ENCODE measurements at regions of chr20 and their contacts with region 1.

Region 1: GRCh38 chr20:48904365-48905296 is 16.9 kb upstream of the ARFGEF2 start:
- DNase-seq: peak; percentile 79
- H3K4me3 Mint-ChIP-seq: no peak overlapping the region
- H3K27ac Mint-ChIP-seq: peak overlapping the region; percentile 28
- H3K4me1 Mint-ChIP-seq: peaks cover 9% of the 10 kb centered on the region
- H3K27me3 Mint-ChIP-seq: peaks cover 2% of the 10 kb centered on the region

Region 2: GRCh38 chr20:48635433-48636310 is 269.0 kb before region 1 on chr20:
- CTCF ChIA-PET with region 1: interaction called, 21 read pairs
- POLR2A ChIA-PET with region 1: no interaction called
- DNase-seq: peak; percentile 73
- H3K4me3 Mint-ChIP-seq: no peak overlapping the region
- H3K27ac Mint-ChIP-seq: no peak overlapping the region
- H3K4me1 Mint-ChIP-seq: peaks cover 15% of the 10 kb centered on the region
- H3K27me3 Mint-ChIP-seq: no peaks in the 10 kb centered on the region

Region 3: DNA sequence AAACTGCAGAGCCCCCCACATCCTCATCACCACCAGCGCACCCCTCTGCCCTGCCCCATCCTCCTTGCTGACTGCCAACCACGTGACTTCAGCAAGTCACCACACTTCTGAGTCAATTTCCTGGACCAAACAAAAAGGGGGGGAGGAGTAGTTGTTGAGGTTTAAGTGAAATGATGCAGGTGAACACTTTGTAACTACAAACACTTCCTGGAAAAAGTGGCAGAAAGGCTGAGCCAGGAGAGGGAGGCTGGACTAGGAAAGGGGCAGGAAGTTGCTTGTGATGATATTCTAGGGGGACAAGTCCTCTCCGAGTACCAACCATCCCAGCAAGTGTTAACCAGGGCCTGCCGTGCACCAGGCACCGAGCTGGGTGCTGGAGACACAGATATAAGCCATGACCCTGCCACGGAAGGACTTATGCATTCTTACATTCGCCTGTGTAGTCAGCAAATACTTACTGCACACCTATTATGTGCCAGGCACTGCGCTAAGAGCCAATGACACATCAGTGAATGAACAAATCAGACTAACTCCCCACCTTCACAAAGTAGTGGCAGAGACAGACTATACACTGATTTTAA is 144.1 kb before region 1 on chr20:
- CTCF ChIA-PET with region 1: no interaction called
- POLR2A ChIA-PET with region 1: no interaction called
- DNase-seq: peak; percentile 86
- H3K4me3 Mint-ChIP-seq: peak overlapping the region; percentile 55
- H3K27ac Mint-ChIP-seq: peak overlapping the region; percentile 94
- H3K4me1 Mint-ChIP-seq: peaks cover 87% of the 10 kb centered on the region
- H3K27me3 Mint-ChIP-seq: no peaks in the 10 kb centered on the region

Region 4: DNA sequence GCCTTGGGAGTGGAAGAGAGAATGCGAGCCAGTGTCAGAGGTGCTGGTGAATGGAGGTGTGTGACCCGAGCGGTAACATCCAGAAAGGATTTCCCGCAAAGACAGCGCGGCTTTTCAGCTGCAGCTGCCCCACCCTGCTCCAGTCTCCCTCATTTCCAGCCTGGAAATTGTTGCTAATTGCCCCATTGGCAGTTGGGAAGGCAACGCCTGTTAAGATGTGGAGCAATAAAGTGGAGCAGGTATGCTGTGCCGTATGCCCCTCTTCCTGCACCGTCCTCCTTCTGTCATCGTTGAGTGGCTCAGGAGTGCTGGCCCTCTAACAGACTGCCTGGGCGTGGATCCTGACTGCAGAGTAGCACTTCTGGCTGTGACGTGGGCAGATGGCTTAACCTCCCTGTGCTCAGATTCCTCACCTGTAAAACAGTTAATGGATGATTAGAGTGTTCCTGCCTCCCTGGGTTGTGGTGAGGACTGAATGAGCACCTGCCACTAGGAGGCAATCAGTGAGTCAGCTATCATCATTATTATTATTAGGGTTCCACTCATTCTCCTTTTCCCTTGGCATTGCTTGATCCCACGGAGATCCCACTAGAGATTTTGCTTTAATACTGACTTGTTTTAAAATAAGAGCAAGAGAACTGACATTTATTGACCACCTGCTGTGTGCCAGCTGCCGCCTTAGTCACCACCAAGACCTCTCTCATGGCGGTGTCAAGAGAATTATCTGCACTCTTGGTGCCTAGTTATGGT is 28.6 kb after region 1 on chr20:
- CTCF ChIA-PET with region 1: no interaction called
- POLR2A ChIA-PET with region 1: no interaction called
- DNase-seq: no peak
- H3K4me3 Mint-ChIP-seq: no peak overlapping the region
- H3K27ac Mint-ChIP-seq: no peak overlapping the region
- H3K4me1 Mint-ChIP-seq: peaks cover 9% of the 10 kb centered on the region
- H3K27me3 Mint-ChIP-seq: no peaks in the 10 kb centered on the region

Measured in activated CD4-positive, alpha-beta T cell treated with anti-CD3 and anti-CD28 coated beads, Interleukin-2, amount 10 ng/mL, durations not matched to agents 7 days and 5 days (primary cell).